SK-N-SH (cell line): ENCODE measurements at regions of chr15 and their contacts with region 1.

Region 1: DNA sequence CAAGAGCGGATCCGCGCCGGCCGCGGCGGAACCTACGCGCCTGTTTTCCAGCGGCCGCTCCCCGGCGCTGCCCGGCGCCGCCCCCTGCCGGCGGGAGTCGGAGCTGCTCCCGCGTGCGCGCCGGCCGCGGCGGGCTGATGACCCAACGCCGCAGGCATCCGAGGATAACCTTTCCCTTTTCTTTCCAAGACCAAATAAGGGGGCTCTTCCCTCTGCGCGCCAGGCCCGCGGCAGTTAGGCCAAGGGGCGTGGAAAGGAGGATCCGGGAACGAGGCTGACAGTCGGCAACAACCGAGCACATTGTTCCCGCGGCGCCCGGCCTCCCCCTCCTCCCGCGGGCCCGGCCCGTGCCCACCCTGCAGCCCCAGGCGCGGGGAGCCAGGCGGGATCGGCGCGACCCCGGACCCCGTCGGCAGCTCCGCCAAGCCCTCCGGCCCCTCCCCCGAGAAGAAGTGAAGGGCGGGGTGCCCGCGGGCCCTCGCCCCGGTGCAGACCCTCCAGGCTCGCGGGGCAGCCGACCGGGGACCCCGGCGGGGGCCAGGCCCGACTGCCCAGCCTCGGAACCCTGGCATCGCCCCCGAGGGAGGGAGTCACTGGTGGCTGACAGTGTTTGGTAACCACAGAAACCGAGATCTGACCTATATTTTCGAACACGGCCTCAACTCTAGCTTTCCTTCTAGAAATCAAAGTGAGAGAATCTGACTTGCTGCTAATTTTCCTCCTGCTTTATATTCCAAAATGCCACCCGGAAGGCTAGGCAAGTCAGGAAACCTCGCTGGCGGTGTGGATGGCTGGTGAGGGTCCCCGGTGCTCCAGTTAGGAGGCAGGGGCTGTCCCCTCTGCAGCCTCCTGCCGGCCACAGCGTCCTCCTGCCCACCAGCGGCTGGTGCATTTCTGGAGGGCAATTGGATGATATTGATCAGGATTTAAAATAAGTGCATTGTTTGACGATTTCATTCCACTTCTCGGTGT is 45.6 kb upstream of the SYNM start:
- DNase-seq: peak; percentile 93
- H3K4me3 ChIP-seq: peak overlapping the region; percentile 60 to 68
- H3K27ac ChIP-seq: peak overlapping the region; percentile 40 to 57; a peak in 3 of 4 replicates
- H3K4me1 ChIP-seq: no peaks in the 10 kb centered on the region; a peak in 1 of 4 replicates
- H3K27me3 ChIP-seq: no peaks in the 10 kb centered on the region
- CTCF ChIP-seq: peak; percentile 71
- EP300 ChIP-seq: no peak; a peak in 1 of 4 replicates
- RAD21 ChIP-seq: peak; percentile 58; the same call in 1 of the 2 replicates

Region 2: DNA sequence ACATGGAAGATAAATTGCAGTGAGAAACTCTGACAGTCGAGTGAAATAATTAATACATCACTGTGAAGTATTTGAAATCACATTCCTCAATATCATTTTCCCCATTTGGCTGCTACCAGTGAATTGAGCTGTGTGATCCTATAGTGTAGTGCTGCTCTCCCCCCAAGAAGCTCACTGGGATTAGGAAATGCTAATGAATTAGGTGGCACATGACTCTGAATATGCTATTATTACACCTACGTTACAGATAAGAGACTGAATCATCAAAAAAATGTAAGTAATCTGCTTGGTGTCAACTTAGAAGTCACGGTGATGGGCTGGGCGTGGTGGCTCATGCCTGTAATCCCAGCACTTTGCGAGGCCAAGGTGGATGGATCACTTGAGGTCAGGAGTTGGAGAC is 10.9 kb after region 1 on chr15:
- CTCF ChIA-PET with region 1: interaction called, 20 read pairs
- POLR2A ChIA-PET with region 1: no interaction called
- DNase-seq: no peak
- H3K4me3 ChIP-seq: no peak overlapping the region
- H3K27ac ChIP-seq: no peak overlapping the region
- H3K4me1 ChIP-seq: no peaks in the 10 kb centered on the region; a peak in 1 of 4 replicates
- H3K27me3 ChIP-seq: no peaks in the 10 kb centered on the region
- CTCF ChIP-seq: no peak
- EP300 ChIP-seq: no peak
- RAD21 ChIP-seq: no peak